Activated T-helper 1 cell treated with anti-CD3 and anti-CD28 coated beads, Interleukin-12 subunit alpha, Interleukin-12 subunit beta, Interleukin-2, Interleukin-4 antibody, amounts not matched to agents 30 ng/mL and 10 ng/mL and 1 ng/mL, durations not matched to agents 14 hours and 24 hours and 36 hours (primary cell): ENCODE measurements at regions of chr1 and their contacts with region 1.

Region 1: DNA sequence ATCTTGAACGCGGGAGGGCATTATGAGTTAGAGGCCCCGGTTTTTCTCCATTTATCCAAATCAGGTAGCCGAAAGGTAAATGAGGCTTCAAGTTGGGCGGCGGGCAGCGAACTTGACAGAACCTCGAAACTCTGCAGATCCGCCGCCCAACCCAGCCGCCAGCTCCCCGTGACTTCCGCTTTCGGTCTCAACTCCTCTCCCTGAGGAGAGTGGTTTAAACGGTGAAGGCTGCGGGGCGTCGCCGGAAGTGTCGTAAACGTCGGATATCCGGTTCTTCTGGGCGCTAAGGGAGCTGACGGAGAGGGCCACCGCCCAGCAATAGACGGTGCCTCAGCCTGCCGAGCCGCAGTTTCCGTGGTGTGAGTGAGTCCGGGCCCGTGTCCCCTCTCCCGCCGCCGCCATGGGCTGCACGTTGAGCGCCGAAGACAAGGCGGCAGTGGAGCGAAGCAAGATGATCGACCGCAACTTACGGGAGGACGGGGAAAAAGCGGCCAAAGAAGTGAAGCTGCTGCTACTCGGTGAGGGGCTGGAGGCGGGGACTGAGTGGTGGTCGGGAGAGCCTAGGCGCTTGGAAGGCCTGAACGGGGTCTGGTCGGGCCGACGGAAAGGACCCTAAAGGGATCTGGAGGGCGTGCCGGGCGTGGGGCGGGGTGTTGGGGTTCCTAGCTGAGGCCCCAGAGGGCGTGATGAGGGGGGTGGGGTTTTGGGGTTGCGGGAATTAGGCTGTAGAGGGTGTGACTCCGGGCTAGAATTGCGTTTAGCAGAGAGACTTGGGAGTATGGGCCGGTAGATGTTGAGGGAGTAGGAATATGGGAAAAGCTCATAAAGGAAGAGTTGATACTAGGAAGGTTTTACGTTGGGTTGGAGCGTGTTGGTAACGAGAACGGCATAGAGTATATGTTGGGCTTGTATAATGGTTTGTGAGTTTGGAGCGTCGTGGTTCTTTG is at the start of gene GNAI3:
- DNase-seq: peak; percentile 96
- H3K4me3 Mint-ChIP-seq: peak within 1 kb of the TSS; percentile 94
- H3K27ac Mint-ChIP-seq: peak within 1 kb of the TSS; percentile 96
- H3K4me1 Mint-ChIP-seq: peaks cover 48% of the 10 kb centered on the region
- H3K27me3 Mint-ChIP-seq: no peaks in the 10 kb centered on the region
- total RNA-seq, gene GNAI3: 8.4 and 8.9 TPM in 2 replicates

Region 2: DNA sequence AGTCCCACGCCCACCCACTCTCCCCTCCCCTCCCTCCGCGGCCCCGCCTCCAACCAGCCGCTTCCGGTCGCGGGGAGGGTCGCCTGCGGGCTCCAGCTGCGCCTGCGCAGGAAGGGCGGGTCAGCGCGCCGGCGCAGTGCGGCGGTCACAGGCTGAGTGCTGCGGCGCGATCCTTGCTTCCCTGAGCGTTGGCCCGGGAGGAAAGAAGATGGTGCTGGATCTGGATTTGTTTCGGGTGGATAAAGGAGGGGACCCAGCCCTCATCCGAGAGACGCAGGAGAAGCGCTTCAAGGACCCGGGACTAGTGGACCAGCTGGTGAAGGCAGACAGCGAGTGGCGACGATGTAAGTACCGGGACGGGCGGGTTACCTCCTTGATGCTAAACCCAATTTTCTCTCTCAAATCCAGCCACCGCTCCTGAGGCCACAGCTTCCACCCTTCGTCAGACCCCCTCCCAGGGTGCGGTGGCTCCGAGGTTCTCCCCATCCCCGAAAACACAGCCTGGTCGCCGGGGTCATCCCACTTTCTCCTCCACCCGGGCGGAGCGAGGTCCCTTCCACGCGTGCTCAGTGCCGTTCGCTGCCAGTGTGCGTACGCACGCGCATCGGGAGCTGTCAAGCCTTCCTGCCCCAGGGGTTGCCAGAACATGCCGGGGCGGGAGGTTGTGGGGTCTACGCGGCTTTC is 334.7 kb before region 1 on chr1 and contains the start of gene SARS1:
- intact Hi-C with region 1: loop called (anchors 1 kb)
- DNase-seq: peak; percentile 88
- H3K4me3 Mint-ChIP-seq: peak within 1 kb of the TSS; percentile 94
- H3K27ac Mint-ChIP-seq: peak within 1 kb of the TSS; percentile 94
- H3K4me1 Mint-ChIP-seq: peaks cover 37% of the 10 kb centered on the region
- H3K27me3 Mint-ChIP-seq: peaks cover 3% of the 10 kb centered on the region
- total RNA-seq, gene SARS1: 147 and 154 TPM in 2 replicates

Region 3: GRCh38 chr1:109493805-109494539 is 54.6 kb before region 1 on chr1 and contains the start of gene CYB561D1:
- intact Hi-C with region 1: loop called (anchors 1 kb)
- DNase-seq: peak; percentile 87
- H3K4me3 Mint-ChIP-seq: peak within 1 kb of the TSS; percentile 96
- H3K27ac Mint-ChIP-seq: peak within 1 kb of the TSS; percentile 71
- H3K4me1 Mint-ChIP-seq: peaks cover 34% of the 10 kb centered on the region
- H3K27me3 Mint-ChIP-seq: no peaks in the 10 kb centered on the region
- total RNA-seq, gene CYB561D1: 12.6 and 13.4 TPM in 2 replicates

Region 4: DNA sequence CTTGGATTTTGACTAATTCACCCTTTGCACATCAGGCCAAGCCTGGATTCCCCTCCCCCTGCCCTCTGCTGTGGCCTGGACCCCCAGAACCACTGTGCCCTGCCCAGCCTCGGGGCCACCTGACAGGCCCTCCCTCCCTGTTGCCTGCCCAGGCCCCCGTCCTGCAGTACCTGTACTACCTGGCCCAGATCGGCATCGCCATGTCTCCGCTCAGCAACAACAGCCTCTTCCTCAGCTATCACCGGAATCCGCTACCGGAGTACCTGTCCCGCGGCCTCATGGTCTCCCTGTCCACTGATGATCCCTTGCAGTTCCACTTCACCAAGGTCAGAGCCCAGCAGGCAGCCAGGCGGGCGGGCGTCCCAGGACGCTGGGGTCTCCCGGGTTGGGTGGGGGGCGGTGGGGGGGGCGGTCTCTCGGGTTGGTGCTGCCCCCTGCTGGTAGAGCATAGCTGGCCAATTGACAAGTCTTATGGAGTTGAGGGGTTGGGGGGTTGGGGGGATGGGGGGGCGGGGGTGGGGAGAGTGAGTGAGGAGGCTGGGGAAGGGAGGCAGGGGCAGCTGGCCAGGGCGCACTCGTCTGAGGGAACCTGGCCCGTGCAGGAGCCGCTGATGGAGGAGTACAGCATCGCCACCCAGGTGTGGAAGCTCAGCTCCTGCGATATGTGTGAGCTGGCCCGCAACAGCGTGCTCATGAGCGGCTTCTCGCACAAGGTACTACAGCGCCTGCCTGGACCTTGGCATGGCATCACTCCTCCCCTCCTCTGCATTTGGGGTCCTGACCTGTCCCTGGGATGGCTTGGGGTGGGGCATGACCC is 81.7 kb after region 1 on chr1:
- intact Hi-C with region 1: loop called (anchors 1 kb)
- DNase-seq: no peak
- H3K4me3 Mint-ChIP-seq: no peak overlapping the region
- H3K27ac Mint-ChIP-seq: no peak overlapping the region
- H3K4me1 Mint-ChIP-seq: peaks cover 11% of the 10 kb centered on the region
- H3K27me3 Mint-ChIP-seq: no peaks in the 10 kb centered on the region

Region 5: DNA sequence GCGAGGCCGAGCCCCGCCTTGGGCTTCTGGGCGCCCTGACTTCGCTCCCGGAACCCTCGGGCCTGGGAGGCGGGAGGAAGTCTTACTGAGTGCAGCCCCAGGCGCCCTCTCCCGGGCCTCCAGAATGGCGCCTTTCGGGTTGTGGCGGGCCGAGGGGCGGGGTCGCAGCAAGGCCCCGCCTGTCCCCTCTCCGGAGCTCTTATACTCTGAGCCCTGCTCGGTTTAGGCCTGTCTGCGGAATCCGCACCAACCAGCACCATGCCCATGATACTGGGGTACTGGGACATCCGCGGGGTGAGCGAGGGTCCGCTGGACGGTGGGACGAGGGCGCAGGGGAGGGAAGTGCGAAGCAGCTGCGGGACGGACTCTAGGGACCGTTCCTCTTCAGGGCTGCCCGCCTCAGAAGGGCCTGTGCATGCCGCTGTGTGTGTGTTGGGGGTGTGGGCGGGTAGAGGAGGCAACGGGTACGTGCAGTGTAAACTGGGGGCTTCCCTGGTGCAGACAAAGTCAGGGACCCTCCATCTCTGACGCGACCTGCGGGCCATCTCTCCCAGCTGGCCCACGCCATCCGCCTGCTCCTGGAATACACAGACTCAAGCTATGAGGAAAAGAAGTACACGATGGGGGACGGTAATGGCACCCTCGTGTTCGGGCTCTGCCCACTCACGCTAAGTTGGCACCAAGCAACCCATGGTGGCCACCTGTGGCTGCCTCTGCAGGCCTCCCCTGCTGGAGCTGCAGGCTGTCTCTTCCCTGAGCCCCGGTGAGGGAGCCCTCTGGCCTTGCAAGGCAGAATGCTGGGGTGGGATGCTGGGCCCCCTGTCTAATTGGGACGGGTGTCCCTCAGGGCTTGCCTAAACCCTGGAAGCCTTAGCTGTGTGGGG is 139.3 kb after region 1 on chr1 and contains the start of gene GSTM1:
- intact Hi-C with region 1: loop called (anchors 2 kb)
- DNase-seq: peak; percentile 86
- H3K4me3 Mint-ChIP-seq: peak within 1 kb of the TSS; percentile 93
- H3K27ac Mint-ChIP-seq: peak within 1 kb of the TSS; percentile 98
- H3K4me1 Mint-ChIP-seq: peaks cover 20% of the 10 kb centered on the region
- H3K27me3 Mint-ChIP-seq: peaks cover 4% of the 10 kb centered on the region
- total RNA-seq, gene GSTM1: 77.4 and 86.4 TPM in 2 replicates

Region 6: GRCh38 chr1:109773146-109773899 is 224.7 kb after region 1 on chr1:
- intact Hi-C with region 1: loop called (anchors 1 kb)
- DNase-seq: peak; percentile 65
- H3K4me3 Mint-ChIP-seq: no peak overlapping the region
- H3K27ac Mint-ChIP-seq: peak overlapping the region; percentile 15
- H3K4me1 Mint-ChIP-seq: peaks cover 23% of the 10 kb centered on the region
- H3K27me3 Mint-ChIP-seq: peaks cover 9% of the 10 kb centered on the region

Region 7: DNA sequence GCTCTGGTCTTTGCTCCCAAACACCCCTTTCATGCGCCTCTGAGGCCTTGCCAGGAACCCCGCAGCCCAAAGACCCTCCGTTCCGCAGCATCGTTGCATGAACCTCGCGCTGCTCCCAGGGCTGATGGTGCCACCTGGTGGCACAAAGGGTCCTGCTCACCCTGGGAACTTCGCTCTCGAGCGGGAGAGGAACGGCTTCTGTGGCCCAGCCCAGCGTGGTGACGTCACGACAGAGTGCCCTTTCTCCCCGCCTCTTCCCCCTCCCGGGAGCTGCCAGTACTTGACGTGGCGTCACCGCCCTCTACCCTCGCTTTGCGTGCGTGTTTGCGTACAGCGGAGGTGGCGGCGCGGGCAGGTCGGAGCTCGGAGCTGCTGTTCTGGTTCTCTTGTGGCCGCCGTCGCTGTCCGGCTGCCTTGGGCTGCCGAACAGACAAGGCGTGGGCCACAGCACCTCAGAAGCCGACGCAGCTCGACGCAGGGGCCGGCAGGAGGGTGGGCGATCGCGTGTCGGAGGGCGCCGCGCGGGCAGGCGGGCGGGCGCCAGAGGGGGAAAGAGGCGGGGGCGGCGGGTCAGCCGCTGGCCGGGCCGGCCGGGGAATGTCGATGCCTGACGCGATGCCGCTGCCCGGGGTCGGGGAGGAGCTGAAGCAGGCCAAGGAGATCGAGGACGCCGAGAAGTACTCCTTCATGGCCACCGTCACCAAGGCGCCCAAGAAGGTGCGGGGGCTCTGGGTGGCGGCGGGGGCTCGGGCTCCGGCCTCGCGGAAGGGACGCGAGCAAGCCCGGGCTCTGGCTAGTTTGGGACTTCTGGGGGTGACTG is 436.1 kb after region 1 on chr1 and contains the start of gene AHCYL1:
- intact Hi-C with region 1: loop called (anchors 1 kb)
- DNase-seq: peak; percentile 99
- H3K4me3 Mint-ChIP-seq: peak within 1 kb of the TSS; percentile 93
- H3K27ac Mint-ChIP-seq: peak within 1 kb of the TSS; percentile 97
- H3K4me1 Mint-ChIP-seq: peaks cover 36% of the 10 kb centered on the region
- H3K27me3 Mint-ChIP-seq: peaks cover 4% of the 10 kb centered on the region
- total RNA-seq, gene AHCYL1: 63.8 and 64.1 TPM in 2 replicates